ENCODE measurements at regions of chr1 and their contacts with region 1.

Region 1: GRCh38 chr1:174159252-174160108 is at the start of gene RABGAP1L:
- DNase-seq: peak; percentile 95 to 96
- ATAC-seq: peak; percentile 97 to 99 (median 98)
- H3K4me3 ChIP-seq: peak within 1 kb of the TSS; percentile 77 to 100 (median 92)
- H3K27ac ChIP-seq: peak within 1 kb of the TSS; percentile 68 to 96 (median 94)
- H3K4me1 ChIP-seq: peaks cover 0 to 36% (median 17%) of the 10 kb centered on the region in 9 donors
- H3K27me3 ChIP-seq: no peaks in the 10 kb centered on the region
- CTCF ChIP-seq: no peak
- total RNA-seq, gene RABGAP1L: 57.0 to 167 (median 114) TPM

Region 2: GRCh38 chr1:173867753-173868265 is 291.7 kb before region 1 on chr1 and contains the start of gene GAS5:
- intact Hi-C with region 1: loop called in 1 of 10 experiments (anchors 10 kb)
- DNase-seq: peak; percentile 98 to 100
- ATAC-seq: peak; percentile 95 to 97 (median 96)
- H3K4me3 ChIP-seq: peak within 1 kb of the TSS; percentile 61 to 94 (median 87)
- H3K27ac ChIP-seq: peak within 1 kb of the TSS; percentile 94 to 99 (median 98)
- H3K4me1 ChIP-seq: peaks cover 4 to 67% (median 58%) of the 10 kb centered on the region in 9 donors
- H3K27me3 ChIP-seq: no peaks in the 10 kb centered on the region
- CTCF ChIP-seq: no peak
- total RNA-seq, gene GAS5: 33.1 to 74.1 (median 42.4) TPM

Region 3: GRCh38 chr1:174028495-174028894 is 131.0 kb before region 1 on chr1:
- intact Hi-C with region 1: loop called in 6 of 10 experiments (anchors 5 to 10 kb)
- DNase-seq: no peak
- ATAC-seq: no peak
- H3K4me3 ChIP-seq: no peak overlapping the region
- H3K27ac ChIP-seq: no peak overlapping the region
- H3K4me1 ChIP-seq: peaks cover 0 to 4% (median 3%) of the 10 kb centered on the region in 9 donors
- H3K27me3 ChIP-seq: no peaks in the 10 kb centered on the region
- CTCF ChIP-seq: no peak

Region 4: GRCh38 chr1:174204697-174205308 is 45.3 kb after region 1 on chr1:
- intact Hi-C with region 1: loop called in 2 of 10 experiments (anchors 2 to 5 kb)
- DNase-seq: no peak
- ATAC-seq: peak in 3 of 8 donors; percentile 19 to 28 (median 22)
- H3K4me3 ChIP-seq: no peak overlapping the region
- H3K27ac ChIP-seq: peak overlapping the region in 5 of 10 donors; percentile 26 to 75 (median 47)
- H3K4me1 ChIP-seq: peaks cover 0 to 40% (median 14%) of the 10 kb centered on the region in 9 donors
- H3K27me3 ChIP-seq: no peaks in the 10 kb centered on the region
- CTCF ChIP-seq: no peak

Region 5: DNA sequence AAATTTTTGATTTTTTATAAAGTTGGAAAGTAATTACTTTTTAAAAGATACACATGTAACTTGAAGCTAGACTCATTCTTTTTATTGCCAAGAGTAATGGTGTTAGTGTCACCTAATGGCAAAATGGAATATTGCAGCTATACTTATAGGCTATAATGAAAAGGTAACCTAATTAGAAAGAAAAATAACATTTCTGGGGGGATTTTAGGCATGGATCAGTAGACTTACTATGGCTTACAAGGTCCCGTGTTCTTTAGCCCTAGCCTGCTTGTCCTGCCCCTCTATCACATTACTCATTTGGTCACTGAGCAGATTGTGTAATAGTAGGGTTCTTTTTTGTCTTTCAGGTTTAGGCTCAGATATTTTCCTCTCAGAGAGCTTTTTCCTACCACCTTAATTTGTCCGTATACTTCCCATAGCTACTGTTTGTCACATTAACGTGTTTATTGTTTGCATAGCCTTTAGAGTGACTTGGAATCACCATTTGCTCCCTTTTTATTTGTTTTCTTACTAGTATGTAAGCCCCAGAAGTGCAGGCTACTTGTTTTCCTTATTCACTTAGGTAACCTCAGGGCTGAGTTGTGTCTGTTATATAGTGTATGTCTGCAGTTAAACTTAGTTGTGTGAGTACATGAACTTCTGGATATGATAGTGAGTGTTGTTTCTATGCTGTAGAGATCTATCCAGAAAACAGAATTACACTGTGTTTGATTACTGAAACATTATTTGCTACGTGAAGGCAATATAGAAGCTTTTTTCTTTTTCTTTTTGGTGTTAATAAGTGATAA is 58.5 kb after region 1 on chr1:
- intact Hi-C with region 1: loop called in 1 of 10 experiments (anchors 5 kb)
- DNase-seq: no peak
- ATAC-seq: peak in 7 of 8 donors; percentile 16 to 74 (median 52)
- H3K4me3 ChIP-seq: no peak overlapping the region
- H3K27ac ChIP-seq: peak overlapping the region in 1 of 10 donors; percentile 35
- H3K4me1 ChIP-seq: peaks cover 0 to 21% (median 8%) of the 10 kb centered on the region in 9 donors
- H3K27me3 ChIP-seq: no peaks in the 10 kb centered on the region
- CTCF ChIP-seq: peak; percentile 51 to 84 (median 75)